Left cardiac atrium (tissue), 4 donors: ENCODE measurements at regions of chr1 and their contacts with region 1.

Region 1: GRCh38 chr1:173202430-173203145 is 4.5 kb downstream of the TNFSF4 start:
- DNase-seq: no peak
- ATAC-seq: peak; percentile 69 to 74

Region 2: DNA sequence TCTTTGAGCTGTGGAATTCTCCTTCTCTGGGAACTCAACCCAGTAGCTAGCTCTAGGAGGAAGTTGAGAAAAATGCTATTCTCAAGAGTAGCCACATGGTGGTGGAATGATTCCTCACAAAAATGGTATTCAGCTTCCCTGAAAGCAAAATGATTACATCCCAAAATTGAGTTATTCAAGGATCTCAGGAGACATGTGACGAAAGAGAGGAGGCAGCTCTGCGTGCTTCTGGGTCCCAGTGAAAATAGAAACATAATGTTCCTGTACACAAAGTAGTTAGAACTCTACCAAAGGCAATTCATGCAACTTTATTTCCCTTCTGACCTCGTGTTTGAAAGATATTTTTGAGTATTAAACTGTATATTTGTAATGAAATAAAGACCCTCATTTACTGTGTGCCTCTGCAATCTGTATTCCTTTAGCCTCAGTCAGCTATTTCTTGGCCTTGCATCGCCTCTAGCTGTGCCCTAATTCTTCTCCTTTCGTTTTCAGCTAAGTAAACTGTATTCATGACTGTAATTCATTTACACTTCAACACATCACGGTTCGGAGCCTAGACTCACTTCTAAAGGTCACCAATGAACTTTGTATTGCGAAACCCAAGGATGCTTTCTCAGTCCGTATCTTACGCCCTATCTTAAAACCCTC is 376.4 kb before region 1 on chr1:
- intact Hi-C with region 1: loop called (anchors 2 to 5 kb)
- DNase-seq: no peak
- ATAC-seq: peak; percentile 85 to 90